Mammary epithelial cell (primary cell): ENCODE measurements at regions of chr2 and their contacts with region 1.

Region 1: GRCh38 chr2:232668805-232669444 is 28.2 kb upstream of the GIGYF2 start:
- DNase-seq: no peak
- H3K4me3 ChIP-seq: no peak overlapping the region
- H3K27ac ChIP-seq: no peak overlapping the region
- H3K4me1 ChIP-seq: no peaks in the 10 kb centered on the region
- H3K27me3 ChIP-seq: no peaks in the 10 kb centered on the region
- CTCF ChIP-seq: peak; percentile 46 to 68

Region 2: DNA sequence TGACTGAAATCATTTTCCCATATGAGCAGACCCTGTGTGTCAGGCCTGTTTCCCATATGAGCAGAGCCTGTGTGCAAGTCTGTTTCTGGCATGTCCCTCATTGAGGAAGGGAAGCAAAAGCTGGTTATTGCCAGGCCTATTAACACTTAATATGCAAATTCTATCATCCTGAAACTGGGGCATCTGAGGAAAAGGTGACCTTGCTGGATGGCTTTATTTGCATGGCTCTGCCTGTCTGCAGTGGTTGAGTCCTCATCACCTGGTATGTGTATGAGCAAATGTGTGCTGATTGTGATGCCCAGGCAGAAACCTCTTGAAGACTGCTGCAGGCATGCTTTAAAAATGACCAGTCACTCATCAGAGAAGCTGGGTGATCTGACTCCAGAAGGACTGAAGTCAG is 87.2 kb before region 1 on chr2:
- CTCF ChIA-PET with region 1: no interaction called
- dilution Hi-C with region 1: loop called (anchors 5 kb)
- in situ Hi-C with region 1: no loop called
- intact Hi-C with region 1: no loop called
- DNase-seq: no peak
- H3K4me3 ChIP-seq: no peak overlapping the region
- H3K27ac ChIP-seq: no peak overlapping the region
- H3K4me1 ChIP-seq: peaks cover 6% of the 10 kb centered on the region
- H3K27me3 ChIP-seq: no peaks in the 10 kb centered on the region
- CTCF ChIP-seq: no peak

Region 3: GRCh38 chr2:232697100-232697865 is 28.4 kb after region 1 on chr2 and contains the start of gene GIGYF2:
- CTCF ChIA-PET with region 1: no interaction called
- dilution Hi-C with region 1: loop called (anchors 5 kb)
- in situ Hi-C with region 1: no loop called
- intact Hi-C with region 1: no loop called
- DNase-seq: peak; percentile 99
- H3K4me3 ChIP-seq: peak within 1 kb of the TSS; percentile 64 to 99 (median 92)
- H3K27ac ChIP-seq: peak within 1 kb of the TSS; percentile 77
- H3K4me1 ChIP-seq: peaks cover 21% of the 10 kb centered on the region
- H3K27me3 ChIP-seq: no peaks in the 10 kb centered on the region
- CTCF ChIP-seq: no peak
- total RNA-seq, gene GIGYF2: 45.3 to 52.2 TPM